Thyroid gland (tissue), 4 donors: ENCODE measurements at regions of chrX and their contacts with region 1.

Region 1: GRCh38 chrX:1391707-1392375 is at the start of gene SLC25A6:
- DNase-seq: peak; percentile 99
- H3K4me3 ChIP-seq: peak within 1 kb of the TSS; percentile 90 to 98 (median 97)
- H3K27ac ChIP-seq: peak within 1 kb of the TSS; percentile 95 to 99 (median 98)
- H3K4me1 ChIP-seq: peaks cover 33 to 39% of the 10 kb centered on the region in 2 donors
- H3K27me3 ChIP-seq: no peaks in the 10 kb centered on the region
- CTCF ChIP-seq: peak in 2 of 6 experiments; percentile 19 to 43
- POLR2A ChIP-seq: peak; percentile 69 to 95
- total RNA-seq, gene SLC25A6: 219 to 397 (median 320) TPM

Region 2: GRCh38 chrX:850471-850916 is 541.3 kb before region 1 on chrX:
- intact Hi-C with region 1: no loop called
- DNase-seq: no peak
- H3K4me3 ChIP-seq: no peak overlapping the region
- H3K27ac ChIP-seq: no peak overlapping the region
- H3K4me1 ChIP-seq: no peaks in the 10 kb centered on the region
- H3K27me3 ChIP-seq: no peaks in the 10 kb centered on the region
- CTCF ChIP-seq: no peak
- POLR2A ChIP-seq: no peak

Region 3: GRCh38 chrX:1591102-1591900 is 199.5 kb after region 1 on chrX and contains the start of gene AKAP17A:
- intact Hi-C with region 1: loop called (anchors 10 kb)
- DNase-seq: peak; percentile 93 to 96
- H3K4me3 ChIP-seq: peak within 1 kb of the TSS; percentile 78 to 88 (median 87)
- H3K27ac ChIP-seq: peak within 1 kb of the TSS; percentile 62 to 65 (median 62)
- H3K4me1 ChIP-seq: peaks cover 4 to 10% of the 10 kb centered on the region in 2 donors
- H3K27me3 ChIP-seq: no peaks in the 10 kb centered on the region
- CTCF ChIP-seq: peak in 1 of 6 experiments; percentile 5
- POLR2A ChIP-seq: peak in 1 of 2 donors; percentile 80
- total RNA-seq, gene AKAP17A: 56.7 to 82.6 (median 63.1) TPM